ENCODE measurements at regions of chr18 and their contacts with region 1.

Region 1: GRCh38 chr18:7856733-7857132 is 289.6 kb downstream of the PTPRM start:
- DNase-seq: no peak
- ATAC-seq: no peak
- H3K4me3 ChIP-seq: no peak overlapping the region
- H3K27ac ChIP-seq: peak overlapping the region in 2 of 10 donors; percentile 60 to 71
- H3K4me1 ChIP-seq: peaks cover 3 to 77% (median 51%) of the 10 kb centered on the region in 9 donors
- H3K27me3 ChIP-seq: no peaks in the 10 kb centered on the region
- CTCF ChIP-seq: no peak

Region 2: GRCh38 chr18:7772510-7772888 is 84.2 kb before region 1 on chr18:
- intact Hi-C with region 1: loop called in 1 of 10 experiments (anchors 5 kb)
- DNase-seq: no peak
- ATAC-seq: peak in 4 of 8 donors; percentile 40 to 60 (median 50)
- H3K4me3 ChIP-seq: no peak overlapping the region
- H3K27ac ChIP-seq: no peak overlapping the region
- H3K4me1 ChIP-seq: peaks cover 0 to 69% (median 42%) of the 10 kb centered on the region in 9 donors
- H3K27me3 ChIP-seq: no peaks in the 10 kb centered on the region
- CTCF ChIP-seq: no peak